CD4-positive, alpha-beta T cell (primary cell): ENCODE measurements at regions of chr2 and their contacts with region 1.

Region 1: GRCh38 chr2:61065715-61066709 is at the start of gene SANBR:
- DNase-seq: peak; percentile 59 to 93 (median 78)
- ATAC-seq: peak; percentile 97
- H3K4me3 ChIP-seq: peak within 1 kb of the TSS; percentile 63
- H3K4me3 Mint-ChIP-seq: peak within 1 kb of the TSS; percentile 99
- H3K27ac ChIP-seq: peak within 1 kb of the TSS in 1 of 2 donors; percentile 30
- H3K27ac Mint-ChIP-seq: peak within 1 kb of the TSS; percentile 68
- H3K4me1 ChIP-seq: peaks cover 11% of the 10 kb centered on the region
- H3K4me1 Mint-ChIP-seq: peaks cover 7% of the 10 kb centered on the region
- H3K27me3 ChIP-seq: no peaks in the 10 kb centered on the region
- H3K27me3 Mint-ChIP-seq: no peaks in the 10 kb centered on the region
- CTCF ChIP-seq: no peak
- total RNA-seq, gene SANBR: 1.1 to 1.3 TPM

Region 2: GRCh38 chr2:61016808-61017555 is 49.0 kb before region 1 on chr2:
- CTCF ChIA-PET with region 1: no interaction called
- POLR2A ChIA-PET with region 1: no interaction called
- intact Hi-C with region 1: loop called (anchors 1 to 5 kb)
- DNase-seq: peak; percentile 39 to 83 (median 58)
- ATAC-seq: peak; percentile 73
- H3K4me3 ChIP-seq: peak overlapping the region; percentile 64
- H3K4me3 Mint-ChIP-seq: peak overlapping the region; percentile 100
- H3K27ac ChIP-seq: peak overlapping the region; percentile 71 to 85
- H3K27ac Mint-ChIP-seq: peak overlapping the region; percentile 89
- H3K4me1 ChIP-seq: peaks cover 10% of the 10 kb centered on the region
- H3K4me1 Mint-ChIP-seq: peaks cover 46% of the 10 kb centered on the region
- H3K27me3 ChIP-seq: no peaks in the 10 kb centered on the region
- H3K27me3 Mint-ChIP-seq: no peaks in the 10 kb centered on the region
- CTCF ChIP-seq: no peak

Region 3: GRCh38 chr2:61144697-61145268 is 78.8 kb after region 1 on chr2:
- CTCF ChIA-PET with region 1: no interaction called
- POLR2A ChIA-PET with region 1: no interaction called
- intact Hi-C with region 1: loop called in 1 of 2 experiments (anchors 5 kb)
- DNase-seq: peak; percentile 80 to 97 (median 88)
- ATAC-seq: peak; percentile 89
- H3K4me3 ChIP-seq: peak overlapping the region; percentile 70
- H3K4me3 Mint-ChIP-seq: peak overlapping the region; percentile 89
- H3K27ac ChIP-seq: peak overlapping the region; percentile 21 to 69
- H3K27ac Mint-ChIP-seq: peak overlapping the region; percentile 86
- H3K4me1 ChIP-seq: peaks cover 12% of the 10 kb centered on the region
- H3K4me1 Mint-ChIP-seq: peaks cover 7% of the 10 kb centered on the region
- H3K27me3 ChIP-seq: no peaks in the 10 kb centered on the region
- H3K27me3 Mint-ChIP-seq: no peaks in the 10 kb centered on the region
- CTCF ChIP-seq: no peak